Naive thymus-derived CD4-positive, alpha-beta T cell (primary cell): ENCODE measurements at regions of chr5 and their contacts with region 1.

Region 1: GRCh38 chr5:39240750-39241149 is 21.4 kb upstream of the FYB1 start:
- DNase-seq: no peak
- ATAC-seq: no peak
- H3K4me3 ChIP-seq: no peak overlapping the region
- H3K4me3 Mint-ChIP-seq: no peak overlapping the region
- H3K27ac ChIP-seq: no peak overlapping the region
- H3K27ac Mint-ChIP-seq: no peak overlapping the region
- H3K4me1 ChIP-seq: no peaks in the 10 kb centered on the region
- H3K4me1 Mint-ChIP-seq: peaks cover 0 to 12% (median 4%) of the 10 kb centered on the region in 7 donors
- H3K27me3 ChIP-seq: no peaks in the 10 kb centered on the region
- H3K27me3 Mint-ChIP-seq: no peaks in the 10 kb centered on the region

Region 2: DNA sequence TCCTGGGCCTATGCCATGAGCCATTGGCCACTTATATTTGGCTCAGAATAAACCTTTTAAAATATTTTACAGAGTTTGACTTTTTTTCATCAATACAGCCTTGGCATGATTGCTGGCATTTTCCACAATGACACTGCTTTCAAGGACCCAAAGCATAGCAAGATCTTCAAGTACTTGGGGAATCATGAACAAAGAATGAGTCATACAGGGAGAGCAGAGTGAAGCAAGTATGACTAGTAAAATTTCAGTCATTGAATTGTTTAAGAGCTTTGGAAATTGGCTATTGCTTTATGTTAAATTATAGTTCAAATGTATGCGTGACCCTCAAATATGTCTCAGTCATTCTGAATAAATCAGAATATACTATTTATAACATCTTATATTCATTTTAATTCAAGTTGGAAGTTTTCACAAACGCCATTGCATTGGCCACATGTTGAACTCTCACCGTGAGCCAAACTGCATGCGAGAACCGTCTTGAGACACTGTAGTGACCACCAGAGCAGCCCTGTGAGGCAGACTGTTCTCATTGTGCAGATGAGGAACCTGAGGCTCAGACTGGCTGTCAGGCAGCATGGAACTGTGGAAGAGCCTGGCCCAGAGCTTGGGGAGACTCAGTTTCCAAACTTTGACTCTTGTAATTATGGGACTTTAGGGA is 1453.8 kb before region 1 on chr5:
- CTCF ChIA-PET with region 1: no interaction called
- POLR2A ChIA-PET with region 1: no interaction called
- intact Hi-C with region 1: no loop called
- DNase-seq: no peak
- ATAC-seq: no peak
- H3K4me3 ChIP-seq: no peak overlapping the region
- H3K4me3 Mint-ChIP-seq: no peak overlapping the region
- H3K27ac ChIP-seq: no peak overlapping the region
- H3K27ac Mint-ChIP-seq: no peak overlapping the region
- H3K4me1 ChIP-seq: no peaks in the 10 kb centered on the region
- H3K4me1 Mint-ChIP-seq: no peaks in the 10 kb centered on the region
- H3K27me3 ChIP-seq: no peaks in the 10 kb centered on the region
- H3K27me3 Mint-ChIP-seq: peaks cover 9 to 30% (median 18%) of the 10 kb centered on the region in 5 donors

Region 3: DNA sequence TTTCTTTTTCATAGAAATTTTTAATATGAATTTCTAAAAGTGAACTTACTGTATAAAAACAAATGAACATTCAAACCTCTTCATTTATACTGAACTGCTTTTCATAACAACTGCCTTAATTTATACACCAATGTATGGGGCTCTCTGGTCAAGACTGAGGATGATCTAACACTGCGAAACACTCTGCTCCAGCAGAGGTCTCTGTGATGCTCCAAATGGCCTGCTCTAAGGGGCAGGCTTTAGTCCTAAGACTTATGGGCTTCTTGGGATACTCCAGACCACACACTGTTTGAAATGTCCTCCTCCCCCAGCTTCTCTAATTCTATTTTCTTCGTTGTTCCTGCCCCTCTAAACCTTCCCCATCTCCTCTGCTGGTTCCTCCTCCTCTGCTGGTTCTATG is 742.8 kb before region 1 on chr5:
- CTCF ChIA-PET with region 1: no interaction called
- POLR2A ChIA-PET with region 1: no interaction called
- intact Hi-C with region 1: no loop called
- DNase-seq: no peak
- ATAC-seq: no peak
- H3K4me3 ChIP-seq: no peak overlapping the region
- H3K4me3 Mint-ChIP-seq: no peak overlapping the region
- H3K27ac ChIP-seq: no peak overlapping the region
- H3K27ac Mint-ChIP-seq: no peak overlapping the region
- H3K4me1 ChIP-seq: no peaks in the 10 kb centered on the region
- H3K4me1 Mint-ChIP-seq: no peaks in the 10 kb centered on the region
- H3K27me3 ChIP-seq: no peaks in the 10 kb centered on the region
- H3K27me3 Mint-ChIP-seq: peaks cover 7 to 26% (median 13%) of the 10 kb centered on the region in 5 donors

Region 4: GRCh38 chr5:39224196-39224761 is 16.5 kb before region 1 on chr5:
- CTCF ChIA-PET with region 1: interaction called, 5 read pairs
- POLR2A ChIA-PET with region 1: no interaction called
- intact Hi-C with region 1: loop called in 1 of 2 experiments (anchors 2 kb)
- DNase-seq: no peak
- ATAC-seq: peak; percentile 77
- H3K4me3 ChIP-seq: no peak overlapping the region
- H3K4me3 Mint-ChIP-seq: no peak overlapping the region
- H3K27ac ChIP-seq: no peak overlapping the region
- H3K27ac Mint-ChIP-seq: peak overlapping the region in 3 of 9 donors; percentile 5 to 54 (median 32)
- H3K4me1 ChIP-seq: peaks cover 0 to 15% of the 10 kb centered on the region in 2 donors
- H3K4me1 Mint-ChIP-seq: peaks cover 15 to 71% (median 49%) of the 10 kb centered on the region in 7 donors
- H3K27me3 ChIP-seq: no peaks in the 10 kb centered on the region
- H3K27me3 Mint-ChIP-seq: no peaks in the 10 kb centered on the region

Region 5: DNA sequence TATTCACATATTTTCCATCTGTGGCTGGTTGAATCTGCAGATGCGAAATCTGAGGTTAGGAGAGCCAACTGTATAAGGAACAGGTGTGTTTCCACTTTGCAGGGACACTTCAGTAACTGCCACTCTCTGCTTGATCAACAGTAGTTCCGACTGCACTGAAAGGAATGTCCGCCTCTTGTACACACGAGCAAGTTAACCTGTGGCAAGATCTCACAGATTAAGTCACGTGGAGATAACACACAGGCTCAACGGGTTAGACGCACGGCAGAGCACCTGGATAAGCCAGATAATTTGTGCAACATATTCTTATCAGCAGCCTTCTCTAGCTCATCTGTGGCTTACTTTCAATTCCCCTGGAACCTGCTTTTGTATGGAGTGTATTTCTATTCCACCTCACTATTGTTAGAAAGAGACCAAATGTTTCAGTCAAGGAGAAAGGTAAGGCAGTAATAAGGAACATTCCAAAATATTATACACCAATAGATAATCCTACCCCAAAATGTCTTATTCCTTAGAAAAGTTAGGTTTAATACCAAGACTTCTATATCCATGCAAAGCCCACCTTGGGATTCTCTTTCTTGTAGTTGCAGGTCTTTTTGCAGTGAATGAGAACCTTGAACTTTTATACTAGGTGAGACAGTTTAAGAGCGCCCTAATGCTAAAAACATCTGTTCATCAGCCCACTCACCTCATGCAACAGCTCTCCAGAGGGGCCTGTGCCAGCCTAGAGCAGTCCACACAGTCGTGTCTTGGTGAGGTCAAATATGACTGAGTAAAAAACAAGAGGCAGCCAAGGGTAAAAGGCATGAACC is 130.0 kb after region 1 on chr5:
- CTCF ChIA-PET with region 1: no interaction called
- POLR2A ChIA-PET with region 1: no interaction called
- intact Hi-C with region 1: no loop called
- DNase-seq: no peak
- ATAC-seq: no peak
- H3K4me3 ChIP-seq: no peak overlapping the region
- H3K4me3 Mint-ChIP-seq: no peak overlapping the region
- H3K27ac ChIP-seq: no peak overlapping the region
- H3K27ac Mint-ChIP-seq: no peak overlapping the region
- H3K4me1 ChIP-seq: no peaks in the 10 kb centered on the region
- H3K4me1 Mint-ChIP-seq: peaks cover 0 to 5% (median 0%) of the 10 kb centered on the region in 7 donors
- H3K27me3 ChIP-seq: no peaks in the 10 kb centered on the region
- H3K27me3 Mint-ChIP-seq: peaks cover 0 to 19% (median 4%) of the 10 kb centered on the region in 5 donors